Naive thymus-derived CD4-positive, alpha-beta T cell (primary cell): ENCODE measurements at regions of chr13 and their contacts with region 1.

Region 1: GRCh38 chr13:40666045-40666904 is at the start of gene FOXO1:
- DNase-seq: peak; percentile 89 to 98 (median 94)
- ATAC-seq: peak; percentile 87
- H3K4me3 ChIP-seq: peak within 1 kb of the TSS; percentile 84
- H3K4me3 Mint-ChIP-seq: peak within 1 kb of the TSS; percentile 90 to 98 (median 94)
- H3K27ac ChIP-seq: peak within 1 kb of the TSS; percentile 93
- H3K27ac Mint-ChIP-seq: peak within 1 kb of the TSS; percentile 91 to 99 (median 92)
- H3K4me1 ChIP-seq: peaks cover 12 to 19% of the 10 kb centered on the region in 2 donors
- H3K4me1 Mint-ChIP-seq: peaks cover 28 to 51% (median 47%) of the 10 kb centered on the region in 7 donors
- H3K27me3 ChIP-seq: no peaks in the 10 kb centered on the region
- H3K27me3 Mint-ChIP-seq: no peaks in the 10 kb centered on the region
- total RNA-seq, gene FOXO1: 36.4 to 97.6 (median 93.7) TPM

Region 2: DNA sequence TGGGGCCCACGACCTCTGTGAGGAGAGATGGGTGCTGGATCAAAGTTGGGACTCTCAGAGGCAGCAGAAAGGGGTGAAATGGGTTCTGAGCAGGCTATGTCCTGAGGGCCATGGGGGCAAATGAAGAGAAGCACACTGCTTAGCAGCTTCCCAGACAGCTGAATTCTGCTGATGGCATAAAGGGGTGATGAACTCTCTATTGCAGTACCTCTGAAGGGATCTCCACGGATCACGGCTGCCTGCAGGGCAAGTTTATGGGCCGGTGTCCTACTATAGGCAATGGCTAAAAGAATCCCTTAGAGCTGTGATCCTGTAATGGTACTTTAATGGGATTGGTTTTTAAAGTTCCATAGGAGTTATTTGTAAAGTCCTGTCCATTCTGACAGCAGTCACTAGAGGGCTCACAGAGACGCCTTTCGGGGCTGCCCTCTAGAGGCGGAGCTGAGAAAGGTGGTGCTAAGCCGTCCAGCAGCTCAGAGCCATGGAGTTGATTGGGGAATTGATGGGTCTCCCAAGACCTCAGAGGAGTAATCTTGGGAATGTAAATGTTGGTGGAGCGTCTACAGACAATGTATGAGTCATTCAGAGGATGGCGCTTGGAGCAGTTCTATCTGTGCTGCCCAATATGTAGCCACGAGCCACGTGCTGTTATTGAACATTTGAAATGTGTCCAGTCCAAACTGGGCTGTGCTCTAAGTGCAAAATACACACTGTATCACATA is 723.6 kb before region 1 on chr13:
- CTCF ChIA-PET with region 1: interaction called, 5 read pairs
- POLR2A ChIA-PET with region 1: interaction called, 3 read pairs
- intact Hi-C with region 1: loop called (anchors 5 kb)
- DNase-seq: peak; percentile 41 to 71 (median 63)
- ATAC-seq: peak; percentile 98
- H3K4me3 ChIP-seq: no peak overlapping the region
- H3K4me3 Mint-ChIP-seq: peak overlapping the region in 2 of 10 donors; percentile 2 to 71
- H3K27ac ChIP-seq: no peak overlapping the region
- H3K27ac Mint-ChIP-seq: peak overlapping the region in 3 of 9 donors; percentile 1 to 63 (median 8)
- H3K4me1 ChIP-seq: no peaks in the 10 kb centered on the region
- H3K4me1 Mint-ChIP-seq: peaks cover 4 to 16% (median 11%) of the 10 kb centered on the region in 7 donors
- H3K27me3 ChIP-seq: no peaks in the 10 kb centered on the region
- H3K27me3 Mint-ChIP-seq: peaks cover 0 to 3% (median 0%) of the 10 kb centered on the region in 5 donors

Region 3: DNA sequence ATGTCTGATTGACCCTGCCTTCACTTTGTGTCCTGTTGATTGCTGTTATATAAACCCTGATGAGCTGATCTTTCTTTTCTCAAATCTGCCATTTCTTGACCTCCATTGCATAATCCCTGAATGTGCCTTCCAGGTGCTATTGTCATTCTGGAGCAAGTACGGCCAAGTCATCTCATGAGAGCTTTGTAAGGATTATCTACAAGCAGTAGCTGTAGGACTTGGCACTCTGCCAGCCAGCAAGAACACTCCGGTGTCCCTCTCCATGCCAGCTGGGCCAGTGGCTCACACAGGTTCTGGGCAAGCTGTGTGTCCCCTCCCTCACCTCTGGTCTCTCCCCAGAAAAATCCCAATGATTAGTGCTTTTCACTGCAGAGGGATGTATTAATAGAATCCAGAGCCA is 347.9 kb before region 1 on chr13:
- CTCF ChIA-PET with region 1: no interaction called
- POLR2A ChIA-PET with region 1: no interaction called
- intact Hi-C with region 1: loop called (anchors 2 to 5 kb)
- DNase-seq: no peak
- ATAC-seq: no peak
- H3K4me3 ChIP-seq: no peak overlapping the region
- H3K4me3 Mint-ChIP-seq: peak overlapping the region in 1 of 10 donors; percentile 20
- H3K27ac ChIP-seq: no peak overlapping the region
- H3K27ac Mint-ChIP-seq: peak overlapping the region in 5 of 9 donors; percentile 17 to 85 (median 67)
- H3K4me1 ChIP-seq: peaks cover 5 to 35% of the 10 kb centered on the region in 2 donors
- H3K4me1 Mint-ChIP-seq: peaks cover 39 to 71% (median 68%) of the 10 kb centered on the region in 7 donors
- H3K27me3 ChIP-seq: no peaks in the 10 kb centered on the region
- H3K27me3 Mint-ChIP-seq: no peaks in the 10 kb centered on the region

Region 4: DNA sequence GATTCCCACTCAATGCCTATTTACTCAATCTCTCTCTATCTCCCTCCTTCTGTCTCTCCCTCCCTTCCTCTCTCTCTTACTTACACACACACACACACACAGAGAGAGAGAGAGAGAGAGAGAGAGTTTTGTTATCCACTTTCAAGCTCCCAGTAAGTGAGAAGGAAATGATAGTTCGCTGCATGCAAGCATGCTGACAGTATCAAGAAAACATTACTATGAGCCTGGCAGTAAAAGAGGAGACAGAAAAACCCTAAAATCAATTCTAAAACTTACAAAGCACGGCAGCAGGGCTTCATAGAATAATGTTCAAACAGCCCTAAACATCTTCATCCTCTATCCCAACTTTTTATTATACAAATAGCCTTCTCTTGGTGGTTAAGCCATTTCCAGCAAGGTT is 171.8 kb before region 1 on chr13:
- CTCF ChIA-PET with region 1: no interaction called
- POLR2A ChIA-PET with region 1: interaction called, 34 read pairs
- intact Hi-C with region 1: loop called in 1 of 2 experiments (anchors 1 kb)
- DNase-seq: peak in 7 of 9 donors; percentile 18 to 64 (median 59)
- ATAC-seq: peak; percentile 66
- H3K4me3 ChIP-seq: peak overlapping the region; percentile 49
- H3K4me3 Mint-ChIP-seq: peak overlapping the region; percentile 76 to 97 (median 85)
- H3K27ac ChIP-seq: peak overlapping the region; percentile 70
- H3K27ac Mint-ChIP-seq: peak overlapping the region; percentile 88 to 98 (median 96)
- H3K4me1 ChIP-seq: peaks cover 38 to 66% of the 10 kb centered on the region in 2 donors
- H3K4me1 Mint-ChIP-seq: peaks cover 54 to 92% (median 85%) of the 10 kb centered on the region in 7 donors
- H3K27me3 ChIP-seq: no peaks in the 10 kb centered on the region
- H3K27me3 Mint-ChIP-seq: no peaks in the 10 kb centered on the region

Region 5: DNA sequence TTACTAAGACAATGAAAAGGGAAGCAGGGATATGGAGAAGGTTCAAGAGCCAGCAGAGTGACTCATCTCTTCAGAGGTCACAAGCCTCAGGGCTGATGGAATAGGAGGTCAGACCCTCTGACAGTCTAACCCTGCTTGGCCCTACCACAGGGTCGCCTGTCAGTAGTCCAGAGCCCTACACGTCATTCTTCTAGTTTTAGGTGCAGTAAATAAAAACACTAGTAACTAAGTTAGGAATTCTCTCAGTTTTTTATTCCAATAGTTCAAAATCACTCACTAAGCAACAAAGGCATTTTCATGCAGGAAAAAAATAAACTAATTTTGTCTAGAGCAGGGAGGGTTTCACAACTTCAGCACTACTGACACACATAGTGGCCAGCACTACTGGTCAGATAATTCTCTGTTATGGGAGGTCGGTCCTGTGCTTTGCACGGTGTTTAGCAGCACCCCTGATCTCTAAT is 27.0 kb before region 1 on chr13:
- CTCF ChIA-PET with region 1: no interaction called
- POLR2A ChIA-PET with region 1: interaction called, 10 read pairs
- intact Hi-C with region 1: no loop called
- DNase-seq: no peak
- ATAC-seq: peak; percentile 73
- H3K4me3 ChIP-seq: no peak overlapping the region
- H3K4me3 Mint-ChIP-seq: peak overlapping the region in 7 of 10 donors; percentile 18 to 81 (median 66)
- H3K27ac ChIP-seq: no peak overlapping the region
- H3K27ac Mint-ChIP-seq: peak overlapping the region; percentile 22 to 88 (median 73)
- H3K4me1 ChIP-seq: peaks cover 33 to 71% of the 10 kb centered on the region in 2 donors
- H3K4me1 Mint-ChIP-seq: peaks cover 66 to 98% (median 89%) of the 10 kb centered on the region in 7 donors
- H3K27me3 ChIP-seq: no peaks in the 10 kb centered on the region
- H3K27me3 Mint-ChIP-seq: no peaks in the 10 kb centered on the region

Region 6: GRCh38 chr13:40777166-40777808 is 111.0 kb after region 1 on chr13:
- CTCF ChIA-PET with region 1: no interaction called
- POLR2A ChIA-PET with region 1: no interaction called
- intact Hi-C with region 1: loop called in 1 of 2 experiments (anchors 1 kb)
- DNase-seq: peak in 2 of 9 donors; percentile 15 to 44
- ATAC-seq: peak; percentile 78
- H3K4me3 ChIP-seq: peak overlapping the region; percentile 37
- H3K4me3 Mint-ChIP-seq: peak overlapping the region; percentile 68 to 92 (median 82)
- H3K27ac ChIP-seq: peak overlapping the region; percentile 61
- H3K27ac Mint-ChIP-seq: peak overlapping the region; percentile 94 to 99 (median 97)
- H3K4me1 ChIP-seq: peaks cover 21 to 24% of the 10 kb centered on the region in 2 donors
- H3K4me1 Mint-ChIP-seq: peaks cover 19 to 36% (median 32%) of the 10 kb centered on the region in 7 donors
- H3K27me3 ChIP-seq: no peaks in the 10 kb centered on the region
- H3K27me3 Mint-ChIP-seq: no peaks in the 10 kb centered on the region